ENCODE measurements at regions of chr7 and their contacts with region 1.

Region 1: DNA sequence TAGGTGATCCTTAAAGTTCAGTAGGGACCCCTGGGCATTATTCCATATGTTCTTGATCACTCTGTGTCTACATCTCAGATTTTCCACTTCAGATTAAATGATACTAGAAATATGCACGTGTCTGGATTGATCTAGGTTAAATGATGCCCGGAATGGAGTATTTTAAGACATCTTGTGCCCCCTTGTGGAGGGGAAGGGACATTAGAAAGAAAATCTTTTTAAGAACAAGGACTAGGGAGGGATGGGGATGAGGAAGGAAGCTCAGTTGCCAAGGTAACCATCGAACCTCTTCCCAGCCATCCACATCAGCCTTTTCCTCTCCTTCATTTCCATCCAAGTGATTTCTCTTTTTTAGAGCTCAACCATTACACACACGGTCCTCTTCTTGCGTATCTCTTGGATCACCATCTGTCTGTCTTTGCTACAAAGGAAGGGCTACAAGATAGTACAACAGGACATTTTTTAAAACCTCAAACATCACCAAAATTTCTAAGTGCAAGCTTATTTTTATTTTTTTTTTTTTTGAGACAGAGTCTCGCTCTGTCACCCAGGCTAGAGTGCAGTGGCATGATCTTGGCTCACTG is 40.5 kb downstream of the PRSS2 start:
- DNase-seq: peak; percentile 64 to 82 (median 79)
- H3K4me3 ChIP-seq: no peak overlapping the region
- H3K4me3 Mint-ChIP-seq: peak overlapping the region in 7 of 8 donors; percentile 57 to 79 (median 71)
- H3K27ac ChIP-seq: peak overlapping the region; percentile 99
- H3K27ac Mint-ChIP-seq: peak overlapping the region; percentile 92 to 100 (median 100)
- H3K4me1 ChIP-seq: peaks cover 79% of the 10 kb centered on the region
- H3K4me1 Mint-ChIP-seq: peaks cover 48 to 76% (median 73%) of the 10 kb centered on the region in 4 donors
- H3K27me3 ChIP-seq: no peaks in the 10 kb centered on the region
- H3K27me3 Mint-ChIP-seq: no peaks in the 10 kb centered on the region

Region 2: DNA sequence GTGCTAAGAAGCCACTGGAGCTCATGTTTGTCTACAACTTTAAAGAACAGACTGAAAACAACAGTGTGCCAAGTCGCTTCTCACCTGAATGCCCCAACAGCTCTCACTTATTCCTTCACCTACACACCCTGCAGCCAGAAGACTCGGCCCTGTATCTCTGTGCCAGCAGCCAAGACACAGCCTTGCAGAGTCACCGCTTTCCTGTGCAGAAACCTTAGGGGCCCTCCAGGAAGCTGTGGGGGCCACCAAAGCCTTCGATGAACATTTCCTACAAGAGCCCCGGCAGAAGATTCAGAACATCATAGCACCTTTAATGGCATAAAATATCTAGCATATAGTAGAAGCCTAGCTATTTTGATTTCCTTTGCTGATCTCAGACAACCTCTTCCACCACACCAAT is 465.4 kb before region 1 on chr7:
- CTCF ChIA-PET with region 1: interaction called, 3 read pairs
- POLR2A ChIA-PET with region 1: interaction called, 53 read pairs
- intact Hi-C with region 1: no loop called
- DNase-seq: peak in 3 of 5 donors; percentile 48 to 62 (median 55)
- H3K4me3 ChIP-seq: no peak overlapping the region
- H3K4me3 Mint-ChIP-seq: peak overlapping the region in 6 of 8 donors; percentile 2 to 75 (median 44)
- H3K27ac ChIP-seq: peak overlapping the region; percentile 10
- H3K27ac Mint-ChIP-seq: peak overlapping the region in 5 of 7 donors; percentile 6 to 84 (median 39)
- H3K4me1 ChIP-seq: peaks cover 25% of the 10 kb centered on the region
- H3K4me1 Mint-ChIP-seq: peaks cover 0 to 37% (median 9%) of the 10 kb centered on the region in 4 donors
- H3K27me3 ChIP-seq: no peaks in the 10 kb centered on the region
- H3K27me3 Mint-ChIP-seq: peaks cover 0 to 3% of the 10 kb centered on the region in 2 donors

Region 3: GRCh38 chr7:142459551-142459963 is 351.7 kb before region 1 on chr7:
- CTCF ChIA-PET with region 1: interaction called, 24 read pairs
- POLR2A ChIA-PET with region 1: interaction called, 76 read pairs
- intact Hi-C with region 1: no loop called
- DNase-seq: peak in 4 of 5 donors; percentile 30 to 39 (median 34)
- H3K4me3 ChIP-seq: no peak overlapping the region
- H3K4me3 Mint-ChIP-seq: peak overlapping the region in 7 of 8 donors; percentile 2 to 69 (median 29)
- H3K27ac ChIP-seq: no peak overlapping the region
- H3K27ac Mint-ChIP-seq: peak overlapping the region in 6 of 7 donors; percentile 34 to 83 (median 58)
- H3K4me1 ChIP-seq: peaks cover 46% of the 10 kb centered on the region
- H3K4me1 Mint-ChIP-seq: peaks cover 35 to 68% (median 53%) of the 10 kb centered on the region in 4 donors
- H3K27me3 ChIP-seq: no peaks in the 10 kb centered on the region
- H3K27me3 Mint-ChIP-seq: no peaks in the 10 kb centered on the region

Region 4: GRCh38 chr7:142557971-142558582 is 253.2 kb before region 1 on chr7:
- CTCF ChIA-PET with region 1: interaction called, 11 read pairs
- POLR2A ChIA-PET with region 1: interaction called, 48 read pairs
- intact Hi-C with region 1: loop called (anchors 1 kb)
- DNase-seq: peak; percentile 31 to 47 (median 41)
- H3K4me3 ChIP-seq: no peak overlapping the region
- H3K4me3 Mint-ChIP-seq: peak overlapping the region in 7 of 8 donors; percentile 17 to 77 (median 66)
- H3K27ac ChIP-seq: no peak overlapping the region
- H3K27ac Mint-ChIP-seq: peak overlapping the region in 4 of 7 donors; percentile 3 to 72 (median 37)
- H3K4me1 ChIP-seq: no peaks in the 10 kb centered on the region
- H3K4me1 Mint-ChIP-seq: peaks cover 0 to 4% (median 2%) of the 10 kb centered on the region in 4 donors
- H3K27me3 ChIP-seq: no peaks in the 10 kb centered on the region
- H3K27me3 Mint-ChIP-seq: peaks cover 2 to 3% of the 10 kb centered on the region in 2 donors

Region 5: DNA sequence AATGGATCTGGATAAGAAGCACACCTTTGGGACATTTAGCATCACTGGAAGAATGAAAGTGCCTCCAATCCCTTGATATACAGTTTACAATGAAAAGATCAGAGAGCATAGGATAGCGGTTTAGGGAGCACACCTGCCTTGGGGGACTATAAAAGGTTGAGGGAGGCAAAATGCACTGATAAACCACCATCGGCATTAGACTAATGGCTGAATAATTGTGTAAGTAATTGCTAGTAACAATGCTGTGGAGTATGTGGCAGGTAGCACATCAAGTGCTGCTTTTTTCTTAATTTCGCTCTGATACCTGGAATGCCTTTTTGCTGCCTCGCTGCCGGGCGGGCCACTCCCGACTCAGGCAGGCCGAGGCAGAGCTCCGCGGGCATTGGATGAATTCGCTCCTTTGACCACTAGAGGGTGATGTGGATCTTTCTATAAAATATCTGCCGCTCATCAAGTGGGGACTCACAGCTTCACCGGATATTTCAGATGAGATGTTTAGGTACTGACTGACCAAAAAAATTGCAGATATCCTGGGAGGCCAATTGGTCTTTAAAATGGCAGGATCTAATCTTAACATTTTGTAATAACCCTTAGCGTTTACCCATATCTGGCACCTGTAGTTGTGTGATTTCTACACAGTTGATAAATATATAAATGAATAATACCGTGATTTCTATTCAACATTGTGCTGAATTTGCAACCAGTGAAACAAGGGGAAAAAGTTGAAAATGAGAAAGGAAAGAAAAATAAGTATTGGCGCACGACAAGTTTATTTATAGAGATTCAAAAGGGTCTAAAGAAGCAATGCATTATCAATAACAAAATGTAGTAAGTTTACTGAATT is 178.7 kb before region 1 on chr7:
- CTCF ChIA-PET with region 1: interaction called, 84 read pairs
- POLR2A ChIA-PET with region 1: interaction called, 114 read pairs
- intact Hi-C with region 1: loop called (anchors 1 kb)
- DNase-seq: peak; percentile 47 to 68 (median 67)
- H3K4me3 ChIP-seq: no peak overlapping the region
- H3K4me3 Mint-ChIP-seq: peak overlapping the region in 4 of 8 donors; percentile 15 to 51 (median 34)
- H3K27ac ChIP-seq: no peak overlapping the region
- H3K27ac Mint-ChIP-seq: peak overlapping the region in 4 of 7 donors; percentile 35 to 82 (median 72)
- H3K4me1 ChIP-seq: peaks cover 3% of the 10 kb centered on the region
- H3K4me1 Mint-ChIP-seq: peaks cover 3 to 15% (median 8%) of the 10 kb centered on the region in 4 donors
- H3K27me3 ChIP-seq: no peaks in the 10 kb centered on the region
- H3K27me3 Mint-ChIP-seq: peaks cover 1% of the 10 kb centered on the region in 2 donors

Region 6: GRCh38 chr7:142833174-142834048 is 22.2 kb after region 1 on chr7:
- CTCF ChIA-PET with region 1: interaction called, 9 read pairs
- POLR2A ChIA-PET with region 1: interaction called, 10 read pairs
- intact Hi-C with region 1: no loop called
- DNase-seq: no peak
- H3K4me3 ChIP-seq: no peak overlapping the region
- H3K4me3 Mint-ChIP-seq: no peak overlapping the region
- H3K27ac ChIP-seq: no peak overlapping the region
- H3K27ac Mint-ChIP-seq: peak overlapping the region in 2 of 7 donors; percentile 5 to 30
- H3K4me1 ChIP-seq: no peaks in the 10 kb centered on the region
- H3K4me1 Mint-ChIP-seq: peaks cover 6 to 11% (median 6%) of the 10 kb centered on the region in 4 donors
- H3K27me3 ChIP-seq: no peaks in the 10 kb centered on the region
- H3K27me3 Mint-ChIP-seq: no peaks in the 10 kb centered on the region

Region 7: DNA sequence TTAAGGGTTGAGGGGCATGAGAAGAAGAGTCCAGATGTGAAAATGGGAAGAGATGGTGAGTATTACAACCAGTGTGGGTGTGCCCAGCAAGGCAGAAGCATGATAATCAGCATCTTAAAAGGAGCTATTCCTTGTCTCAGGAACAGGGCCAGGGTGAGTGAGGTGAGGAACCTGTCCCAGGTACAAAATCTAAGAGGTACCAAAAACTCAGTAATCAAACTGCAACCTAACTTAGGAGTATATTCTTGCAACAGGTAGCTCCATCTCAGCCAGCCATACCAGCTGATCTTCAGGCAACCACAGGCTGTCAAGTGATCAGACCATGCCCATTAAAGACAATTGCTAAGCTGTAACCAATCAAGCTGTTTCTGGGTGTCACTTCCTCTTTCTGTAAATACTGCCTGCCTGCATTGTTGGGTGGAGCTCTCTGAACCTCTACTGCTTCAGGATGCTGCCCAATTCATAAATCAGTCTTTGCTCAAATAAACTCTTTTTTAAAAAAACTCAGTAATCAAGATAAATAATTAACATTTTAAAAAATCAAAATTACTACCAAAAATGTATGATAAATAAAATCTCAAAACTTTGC is 143.5 kb after region 1 on chr7:
- CTCF ChIA-PET with region 1: no interaction called
- POLR2A ChIA-PET with region 1: no interaction called
- intact Hi-C with region 1: no loop called
- DNase-seq: no peak
- H3K4me3 ChIP-seq: no peak overlapping the region
- H3K4me3 Mint-ChIP-seq: no peak overlapping the region
- H3K27ac ChIP-seq: no peak overlapping the region
- H3K27ac Mint-ChIP-seq: no peak overlapping the region
- H3K4me1 ChIP-seq: no peaks in the 10 kb centered on the region
- H3K4me1 Mint-ChIP-seq: no peaks in the 10 kb centered on the region
- H3K27me3 ChIP-seq: no peaks in the 10 kb centered on the region
- H3K27me3 Mint-ChIP-seq: peaks cover 20 to 21% of the 10 kb centered on the region in 2 donors

Region 8: DNA sequence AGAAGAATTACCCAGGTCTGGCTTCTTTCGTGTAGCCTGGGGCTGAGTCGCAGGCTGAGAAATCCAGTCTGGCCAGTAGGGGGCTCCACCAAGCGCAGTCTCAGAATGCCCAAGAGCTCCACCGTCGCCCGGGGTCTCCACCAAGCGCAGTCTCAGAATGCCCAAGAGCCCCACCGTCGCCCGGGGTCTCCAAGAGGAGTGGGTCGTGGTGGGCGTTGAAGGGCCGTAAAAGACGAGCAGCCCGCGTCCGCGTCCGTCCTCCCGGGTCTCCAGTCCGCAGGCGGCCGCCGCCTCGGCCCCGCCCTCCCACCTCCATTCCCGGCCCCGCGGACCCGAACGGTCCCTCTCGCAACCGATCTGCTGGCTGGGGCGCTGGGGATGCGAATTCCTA is 569.0 kb after region 1 on chr7:
- CTCF ChIA-PET with region 1: no interaction called
- POLR2A ChIA-PET with region 1: interaction called, 15 read pairs
- intact Hi-C with region 1: no loop called
- DNase-seq: peak; percentile 83 to 88 (median 84)
- H3K4me3 ChIP-seq: peak overlapping the region; percentile 72 to 97
- H3K4me3 Mint-ChIP-seq: peak overlapping the region; percentile 91 to 95 (median 92)
- H3K27ac ChIP-seq: peak overlapping the region; percentile 91
- H3K27ac Mint-ChIP-seq: peak overlapping the region; percentile 92 to 99 (median 96)
- H3K4me1 ChIP-seq: peaks cover 70% of the 10 kb centered on the region
- H3K4me1 Mint-ChIP-seq: peaks cover 38 to 48% (median 44%) of the 10 kb centered on the region in 4 donors
- H3K27me3 ChIP-seq: no peaks in the 10 kb centered on the region
- H3K27me3 Mint-ChIP-seq: no peaks in the 10 kb centered on the region

Measured in CD4-positive, alpha-beta memory T cell (primary cell).